Activated T-helper 1 cell treated with anti-CD3 and anti-CD28 coated beads, Interleukin-12 subunit alpha, Interleukin-12 subunit beta, Interleukin-2, Interleukin-4 antibody, amounts not matched to agents 30 ng/mL and 10 ng/mL and 1 ng/mL, durations not matched to agents 14 hours and 24 hours and 36 hours (primary cell): ENCODE measurements at regions of chr10 and their contacts with region 1.

Region 1: GRCh38 chr10:33273295-33274002 is 61.0 kb downstream of the NRP1 start:
- DNase-seq: no peak
- H3K4me3 Mint-ChIP-seq: no peak overlapping the region
- H3K27ac Mint-ChIP-seq: no peak overlapping the region
- H3K4me1 Mint-ChIP-seq: no peaks in the 10 kb centered on the region
- H3K27me3 Mint-ChIP-seq: peaks cover 31% of the 10 kb centered on the region

Region 2: GRCh38 chr10:33174674-33175434 is 98.6 kb before region 1 on chr10:
- intact Hi-C with region 1: no loop called
- DNase-seq: no peak
- H3K4me3 Mint-ChIP-seq: no peak overlapping the region
- H3K27ac Mint-ChIP-seq: no peak overlapping the region
- H3K4me1 Mint-ChIP-seq: peaks cover 4% of the 10 kb centered on the region
- H3K27me3 Mint-ChIP-seq: peaks cover 12% of the 10 kb centered on the region

Region 3: GRCh38 chr10:33204049-33204448 is 69.4 kb before region 1 on chr10:
- intact Hi-C with region 1: no loop called
- DNase-seq: no peak
- H3K4me3 Mint-ChIP-seq: no peak overlapping the region
- H3K27ac Mint-ChIP-seq: no peak overlapping the region
- H3K4me1 Mint-ChIP-seq: no peaks in the 10 kb centered on the region
- H3K27me3 Mint-ChIP-seq: peaks cover 10% of the 10 kb centered on the region

Region 4: GRCh38 chr10:33234831-33235237 is 38.6 kb before region 1 on chr10:
- intact Hi-C with region 1: loop called (anchors 5 kb)
- DNase-seq: no peak
- H3K4me3 Mint-ChIP-seq: no peak overlapping the region
- H3K27ac Mint-ChIP-seq: no peak overlapping the region
- H3K4me1 Mint-ChIP-seq: no peaks in the 10 kb centered on the region
- H3K27me3 Mint-ChIP-seq: peaks cover 9% of the 10 kb centered on the region